CD8-positive, alpha-beta T cell (primary cell): ENCODE measurements at regions of chr17 and their contacts with region 1.

Region 1: GRCh38 chr17:39621523-39622379 is 5.0 kb upstream of the PPP1R1B start:
- DNase-seq: peak; percentile 78 to 96 (median 87)
- ATAC-seq: peak; percentile 79
- H3K4me3 ChIP-seq: peak overlapping the region in 1 of 2 experiments; percentile 27
- H3K4me3 Mint-ChIP-seq: peak overlapping the region; percentile 77
- H3K27ac ChIP-seq: peak overlapping the region in 1 of 2 experiments; percentile 17
- H3K27ac Mint-ChIP-seq: peak overlapping the region; percentile 87
- H3K4me1 ChIP-seq: peaks cover 36% of the 10 kb centered on the region
- H3K4me1 Mint-ChIP-seq: peaks cover 23% of the 10 kb centered on the region
- H3K27me3 ChIP-seq: peaks cover 8 to 10% of the 10 kb centered on the region in 2 experiments
- H3K27me3 Mint-ChIP-seq: peaks cover 14% of the 10 kb centered on the region
- CTCF ChIP-seq: peak; percentile 100

Region 2: DNA sequence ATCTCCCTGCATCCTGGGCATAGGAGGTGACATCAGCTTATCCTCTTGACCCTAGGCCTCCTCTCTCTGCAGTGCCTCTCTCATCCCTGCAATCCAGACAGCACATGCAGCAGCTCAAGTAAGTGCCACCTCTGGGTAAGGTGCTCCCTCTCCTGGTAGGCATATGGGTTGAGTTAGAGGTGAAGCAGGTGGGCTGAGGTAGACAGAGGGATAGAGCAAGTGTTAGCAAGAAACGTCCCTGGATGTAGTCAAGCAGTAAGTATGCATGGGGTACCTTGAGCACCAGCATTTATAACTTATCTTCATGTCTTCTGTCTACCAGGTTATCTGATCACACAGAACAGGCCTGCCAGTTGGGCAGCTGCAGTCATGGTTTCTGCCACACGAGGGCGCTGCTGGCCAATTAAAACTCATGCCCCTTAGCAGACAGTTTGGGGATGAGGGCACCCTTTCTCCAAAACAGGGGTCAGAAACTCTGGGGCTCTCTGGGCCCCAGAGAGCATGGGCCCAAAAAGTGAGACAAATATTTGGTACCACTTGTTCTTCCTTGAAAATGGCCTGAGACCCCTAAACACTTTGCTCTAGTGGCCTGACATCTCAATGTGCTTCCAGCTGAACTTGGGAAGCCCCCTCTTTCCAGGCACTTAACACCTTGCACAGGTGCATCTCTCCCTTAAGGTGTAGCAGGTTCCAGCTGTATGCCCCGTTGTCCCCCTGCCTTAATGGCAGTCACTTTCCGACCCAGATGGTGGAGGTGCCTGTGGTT is 73.9 kb before region 1 on chr17:
- CTCF ChIA-PET with region 1: interaction called, 68 read pairs
- POLR2A ChIA-PET with region 1: interaction called, 3 read pairs
- intact Hi-C with region 1: loop called in 1 of 2 experiments (anchors 1 kb)
- DNase-seq: peak; percentile 66 to 85 (median 73)
- ATAC-seq: peak; percentile 89
- H3K4me3 ChIP-seq: no peak overlapping the region
- H3K4me3 Mint-ChIP-seq: no peak overlapping the region
- H3K27ac ChIP-seq: no peak overlapping the region
- H3K27ac Mint-ChIP-seq: no peak overlapping the region
- H3K4me1 ChIP-seq: no peaks in the 10 kb centered on the region
- H3K4me1 Mint-ChIP-seq: no peaks in the 10 kb centered on the region
- H3K27me3 ChIP-seq: no peaks in the 10 kb centered on the region
- H3K27me3 Mint-ChIP-seq: no peaks in the 10 kb centered on the region
- CTCF ChIP-seq: peak; percentile 84

Region 3: GRCh38 chr17:39636927-39637736 is 15.4 kb after region 1 on chr17 and contains the start of gene STARD3:
- CTCF ChIA-PET with region 1: interaction called, 263 read pairs
- POLR2A ChIA-PET with region 1: interaction called, 4 read pairs
- intact Hi-C with region 1: loop called in 1 of 2 experiments (anchors 1 kb)
- DNase-seq: peak; percentile 78 to 95 (median 92)
- ATAC-seq: peak; percentile 85
- H3K4me3 ChIP-seq: peak within 1 kb of the TSS; percentile 85 to 97
- H3K4me3 Mint-ChIP-seq: peak within 1 kb of the TSS; percentile 93
- H3K27ac ChIP-seq: peak within 1 kb of the TSS; percentile 86 to 94
- H3K27ac Mint-ChIP-seq: peak within 1 kb of the TSS; percentile 97
- H3K4me1 ChIP-seq: peaks cover 47% of the 10 kb centered on the region
- H3K4me1 Mint-ChIP-seq: peaks cover 64% of the 10 kb centered on the region
- H3K27me3 ChIP-seq: no peaks in the 10 kb centered on the region
- H3K27me3 Mint-ChIP-seq: no peaks in the 10 kb centered on the region
- CTCF ChIP-seq: no peak
- total RNA-seq, gene STARD3: 102 to 118 TPM

Region 4: DNA sequence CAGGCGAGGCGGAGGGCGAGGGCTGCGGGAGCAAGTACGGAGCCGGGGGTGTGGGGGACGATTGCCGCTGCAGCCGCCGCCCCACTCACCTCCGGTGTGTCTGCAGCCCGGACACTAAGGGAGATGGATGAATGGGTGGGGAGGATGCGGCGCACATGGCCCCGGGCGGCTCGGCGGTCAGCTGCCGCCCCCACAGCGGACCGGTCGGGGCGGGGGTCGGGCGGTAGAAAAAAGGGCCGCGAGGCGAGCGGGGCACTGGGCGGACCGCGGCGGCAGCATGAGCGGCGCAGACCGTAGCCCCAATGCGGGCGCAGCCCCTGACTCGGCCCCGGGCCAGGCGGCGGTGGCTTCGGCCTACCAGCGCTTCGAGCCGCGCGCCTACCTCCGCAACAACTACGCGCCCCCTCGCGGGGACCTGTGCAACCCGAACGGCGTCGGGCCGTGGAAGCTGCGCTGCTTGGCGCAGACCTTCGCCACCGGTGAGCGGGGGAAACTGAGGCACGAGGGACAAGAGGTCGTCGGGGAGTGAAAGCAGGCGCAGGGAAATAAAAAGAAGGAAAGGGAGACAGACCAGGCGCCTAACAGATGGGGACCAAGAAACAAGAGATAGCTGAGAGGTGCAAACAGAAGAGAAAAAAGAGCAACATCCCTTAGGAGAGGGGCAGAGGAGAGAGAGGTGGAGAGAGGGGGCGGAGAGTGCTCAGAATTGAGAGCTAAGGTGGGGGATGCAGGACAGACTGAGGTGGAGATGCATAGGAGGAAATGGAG is 46.6 kb after region 1 on chr17 and contains the start of gene PNMT:
- CTCF ChIA-PET with region 1: interaction called, 205 read pairs
- POLR2A ChIA-PET with region 1: interaction called, 5 read pairs
- intact Hi-C with region 1: loop called (anchors 1 kb)
- DNase-seq: peak; percentile 37 to 84 (median 68)
- ATAC-seq: peak; percentile 79
- H3K4me3 ChIP-seq: peak within 1 kb of the TSS; percentile 29 to 50
- H3K4me3 Mint-ChIP-seq: peak within 1 kb of the TSS; percentile 79
- H3K27ac ChIP-seq: no peak within 1 kb of the TSS
- H3K27ac Mint-ChIP-seq: no peak within 1 kb of the TSS
- H3K4me1 ChIP-seq: peaks cover 26% of the 10 kb centered on the region
- H3K4me1 Mint-ChIP-seq: peaks cover 25% of the 10 kb centered on the region
- H3K27me3 ChIP-seq: peaks cover 0 to 2% of the 10 kb centered on the region in 2 experiments
- H3K27me3 Mint-ChIP-seq: peaks cover 12% of the 10 kb centered on the region
- CTCF ChIP-seq: peak; percentile 72
- total RNA-seq, gene PNMT: 0.43 TPM in 1 of 2 experiments, not detected in the other

Region 5: GRCh38 chr17:39730095-39730921 is 108.6 kb after region 1 on chr17 and contains the start of gene MIEN1:
- CTCF ChIA-PET with region 1: interaction called, 45 read pairs
- POLR2A ChIA-PET with region 1: interaction called, 10 read pairs
- intact Hi-C with region 1: loop called (anchors 1 kb)
- DNase-seq: peak; percentile 89 to 99 (median 95)
- ATAC-seq: peak; percentile 93
- H3K4me3 ChIP-seq: peak within 1 kb of the TSS; percentile 64 to 72
- H3K4me3 Mint-ChIP-seq: peak within 1 kb of the TSS; percentile 90
- H3K27ac ChIP-seq: peak within 1 kb of the TSS; percentile 78 to 91
- H3K27ac Mint-ChIP-seq: peak within 1 kb of the TSS; percentile 94
- H3K4me1 ChIP-seq: peaks cover 17% of the 10 kb centered on the region
- H3K4me1 Mint-ChIP-seq: peaks cover 17% of the 10 kb centered on the region
- H3K27me3 ChIP-seq: no peaks in the 10 kb centered on the region
- H3K27me3 Mint-ChIP-seq: no peaks in the 10 kb centered on the region
- CTCF ChIP-seq: peak; percentile 98
- total RNA-seq, gene MIEN1: 29.5 to 30.1 TPM

Region 6: DNA sequence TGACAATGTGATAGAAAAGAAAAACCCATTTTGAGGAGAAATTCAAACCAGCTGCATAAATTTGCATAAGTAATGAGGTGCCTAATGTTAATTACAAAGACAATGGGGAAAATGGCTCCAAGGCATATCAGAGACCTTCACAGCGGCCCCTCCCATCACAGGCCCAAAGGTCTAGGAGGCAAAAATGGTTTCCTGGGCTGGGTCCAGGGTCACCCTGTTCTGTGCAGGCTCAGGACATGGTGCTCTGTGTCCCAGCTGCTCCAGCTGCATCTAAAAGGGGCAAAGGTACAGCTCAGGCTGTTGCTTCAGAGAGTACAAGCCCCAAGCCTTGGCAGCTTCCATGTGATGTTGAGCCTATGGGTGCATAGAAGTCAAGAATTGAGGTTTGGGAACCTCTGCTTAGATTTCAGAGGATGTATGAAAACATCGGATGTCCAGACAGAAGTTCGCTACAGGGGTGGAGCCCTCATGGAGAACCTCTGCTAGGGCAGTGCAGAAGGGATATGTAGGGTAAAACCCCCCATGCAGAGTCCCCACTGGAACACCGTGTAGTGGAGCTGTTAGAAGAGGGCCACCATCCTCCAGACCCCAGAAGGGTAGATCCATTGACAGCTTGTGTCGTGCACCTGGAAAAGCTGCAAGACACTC is 201.8 kb after region 1 on chr17:
- CTCF ChIA-PET with region 1: no interaction called
- POLR2A ChIA-PET with region 1: no interaction called
- intact Hi-C with region 1: no loop called
- DNase-seq: no peak
- ATAC-seq: no peak
- H3K4me3 ChIP-seq: no peak overlapping the region
- H3K4me3 Mint-ChIP-seq: no peak overlapping the region
- H3K27ac ChIP-seq: no peak overlapping the region
- H3K27ac Mint-ChIP-seq: peak overlapping the region; percentile 43
- H3K4me1 ChIP-seq: peaks cover 35% of the 10 kb centered on the region
- H3K4me1 Mint-ChIP-seq: peaks cover 43% of the 10 kb centered on the region
- H3K27me3 ChIP-seq: no peaks in the 10 kb centered on the region
- H3K27me3 Mint-ChIP-seq: no peaks in the 10 kb centered on the region
- CTCF ChIP-seq: no peak

Region 7: DNA sequence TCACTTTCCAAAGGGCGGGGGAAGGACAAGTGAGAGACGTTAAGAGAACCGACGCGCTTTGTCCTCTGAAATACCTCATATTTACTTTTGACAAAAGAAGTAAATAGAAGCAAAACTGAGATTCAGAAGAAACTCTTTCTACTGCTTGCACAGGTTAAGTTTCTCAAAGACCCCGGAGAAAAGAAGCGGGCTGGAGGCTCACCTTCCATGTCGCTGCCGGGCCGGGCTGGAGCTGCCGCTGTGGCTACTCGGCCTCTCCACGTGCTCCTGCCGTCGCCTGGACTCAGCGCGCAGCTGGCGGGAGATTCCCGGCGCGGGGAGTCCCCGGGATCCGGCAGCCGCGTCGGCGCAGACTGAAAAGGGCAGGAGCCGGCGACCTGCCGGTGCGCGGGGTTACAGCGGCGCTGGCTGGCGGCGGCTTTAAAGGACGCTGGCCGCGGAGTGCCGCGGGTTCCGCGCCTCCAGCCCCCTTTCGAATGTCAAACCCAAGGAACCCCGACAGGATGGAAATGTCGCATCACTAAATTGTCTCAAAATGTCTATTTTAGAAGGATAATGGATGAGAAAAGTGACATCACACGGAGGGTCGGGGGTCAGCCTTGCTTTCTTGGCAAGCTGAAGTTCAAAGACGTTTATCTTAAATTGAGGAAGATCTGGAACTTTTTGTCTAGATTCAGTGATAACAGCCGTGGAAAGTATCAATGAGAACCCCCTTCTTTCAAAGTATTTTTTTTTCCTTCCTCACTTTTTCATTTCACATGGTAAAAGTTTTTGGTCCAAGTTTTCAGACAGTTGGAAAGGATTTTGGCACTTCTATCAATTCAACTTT is 242.4 kb after region 1 on chr17 and contains the start of gene IKZF3:
- CTCF ChIA-PET with region 1: interaction called, 7 read pairs
- POLR2A ChIA-PET with region 1: no interaction called
- intact Hi-C with region 1: loop called (anchors 1 to 2 kb)
- DNase-seq: peak; percentile 59 to 96 (median 78)
- ATAC-seq: peak; percentile 67
- H3K4me3 ChIP-seq: peak within 1 kb of the TSS; percentile 65 to 74
- H3K4me3 Mint-ChIP-seq: peak within 1 kb of the TSS; percentile 89
- H3K27ac ChIP-seq: peak within 1 kb of the TSS; percentile 92 to 94
- H3K27ac Mint-ChIP-seq: peak within 1 kb of the TSS; percentile 98
- H3K4me1 ChIP-seq: peaks cover 56% of the 10 kb centered on the region
- H3K4me1 Mint-ChIP-seq: peaks cover 61% of the 10 kb centered on the region
- H3K27me3 ChIP-seq: no peaks in the 10 kb centered on the region
- H3K27me3 Mint-ChIP-seq: no peaks in the 10 kb centered on the region
- CTCF ChIP-seq: peak; percentile 49
- total RNA-seq, gene IKZF3: 57.3 to 59.8 TPM

Region 8: GRCh38 chr17:40026816-40027613 is 405.3 kb after region 1 on chr17:
- CTCF ChIA-PET with region 1: interaction called, 7 read pairs
- POLR2A ChIA-PET with region 1: no interaction called
- intact Hi-C with region 1: loop called (anchors 1 to 2 kb)
- DNase-seq: peak; percentile 45 to 87 (median 78)
- ATAC-seq: peak; percentile 88
- H3K4me3 ChIP-seq: no peak overlapping the region
- H3K4me3 Mint-ChIP-seq: no peak overlapping the region
- H3K27ac ChIP-seq: no peak overlapping the region
- H3K27ac Mint-ChIP-seq: no peak overlapping the region
- H3K4me1 ChIP-seq: peaks cover 21% of the 10 kb centered on the region
- H3K4me1 Mint-ChIP-seq: peaks cover 22% of the 10 kb centered on the region
- H3K27me3 ChIP-seq: no peaks in the 10 kb centered on the region
- H3K27me3 Mint-ChIP-seq: no peaks in the 10 kb centered on the region
- CTCF ChIP-seq: peak; percentile 79